Sigmoid colon (tissue), 7 donors: ENCODE measurements at regions of chr2 and their contacts with region 1.

Region 1: GRCh38 chr2:48727565-48727964 is 28.0 kb downstream of the LHCGR start:
- DNase-seq: no peak
- H3K4me3 ChIP-seq: no peak overlapping the region
- H3K27ac ChIP-seq: peak overlapping the region in 1 of 4 donors; percentile 41
- H3K4me1 ChIP-seq: peaks cover 0 to 2% (median under 1%) of the 10 kb centered on the region in 4 donors
- H3K27me3 ChIP-seq: peaks cover 0 to 3% (median 0%) of the 10 kb centered on the region in 3 donors
- CTCF ChIP-seq: no peak
- EP300 ChIP-seq: no peak
- POLR2A ChIP-seq: no peak

Region 2: GRCh38 chr2:48420512-48421197 is 306.9 kb before region 1 on chr2:
- intact Hi-C with region 1: no loop called
- DNase-seq: peak; percentile 91
- H3K4me3 ChIP-seq: no peak overlapping the region
- H3K27ac ChIP-seq: no peak overlapping the region
- H3K4me1 ChIP-seq: peaks cover 0 to 9% (median 4%) of the 10 kb centered on the region in 4 donors
- H3K27me3 ChIP-seq: peaks cover 0 to 2% (median 0%) of the 10 kb centered on the region in 3 donors
- CTCF ChIP-seq: peak; percentile 86 to 98 (median 94)
- EP300 ChIP-seq: no peak
- POLR2A ChIP-seq: no peak

Region 3: DNA sequence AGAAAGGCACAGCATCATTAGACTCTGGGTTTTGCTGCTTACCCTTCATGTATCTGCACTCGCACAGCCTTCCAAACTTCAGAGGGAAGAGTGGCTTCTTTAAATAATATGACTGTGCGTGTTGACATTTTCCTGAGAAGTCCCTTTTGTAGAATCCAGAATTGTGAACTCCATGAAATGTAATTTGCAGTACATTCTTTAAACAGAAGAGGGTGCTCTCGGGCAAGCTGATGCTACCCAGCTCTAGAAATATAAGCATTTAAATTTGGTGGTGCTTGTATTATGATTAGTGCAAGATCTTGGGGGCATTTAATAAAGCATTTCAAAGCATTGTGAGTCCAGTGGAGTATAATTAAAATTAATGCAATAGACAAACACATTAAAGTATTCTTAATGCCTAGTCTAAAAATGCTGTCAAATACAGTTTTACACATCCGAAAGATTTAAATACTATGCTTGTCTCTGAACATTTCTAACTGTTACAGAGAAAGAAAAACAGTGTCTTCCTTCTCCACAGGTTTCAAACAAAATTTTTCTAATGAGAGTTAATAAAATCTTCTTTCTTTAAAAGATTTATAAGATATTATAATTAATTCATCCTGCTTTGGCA is 127.3 kb before region 1 on chr2:
- intact Hi-C with region 1: loop called (anchors 5 kb)
- DNase-seq: no peak
- H3K4me3 ChIP-seq: no peak overlapping the region
- H3K27ac ChIP-seq: no peak overlapping the region
- H3K4me1 ChIP-seq: peaks cover 0 to 6% (median 2%) of the 10 kb centered on the region in 4 donors
- H3K27me3 ChIP-seq: no peaks in the 10 kb centered on the region
- CTCF ChIP-seq: peak in 3 of 4 experiments; percentile 26 to 60 (median 37)
- EP300 ChIP-seq: no peak
- POLR2A ChIP-seq: no peak